K562 (cell line): ENCODE measurements at regions of chr9 and their contacts with region 1.

Region 1: GRCh38 chr9:128275996-128276573 is at the starts of genes GOLGA2 and SWI5:
- DNase-seq: peak; percentile 100
- ATAC-seq: peak; percentile 95
- H3K4me3 ChIP-seq: peak within 1 kb of the TSS; percentile 85
- H3K27ac ChIP-seq: peak within 1 kb of the TSS; percentile 90
- H3K4me1 ChIP-seq: peaks cover 40 to 53% of the 10 kb centered on the region in 2 experiments
- H3K27me3 ChIP-seq: no peaks in the 10 kb centered on the region
- CTCF ChIP-seq: no peak; a peak in 1 of 6 replicates
- EP300 ChIP-seq: 0 out of 2 replicates have a peak, but pooled peaks have one; percentile 6
- POLR2A ChIP-seq: no peak
- RAD21 ChIP-seq: no peak; a peak in 1 of 4 replicates
- polyA plus RNA-seq, gene GOLGA2: 15.7 to 21.9 TPM
- polyA plus RNA-seq, gene SWI5: 62.8 to 133 TPM

Region 2: DNA sequence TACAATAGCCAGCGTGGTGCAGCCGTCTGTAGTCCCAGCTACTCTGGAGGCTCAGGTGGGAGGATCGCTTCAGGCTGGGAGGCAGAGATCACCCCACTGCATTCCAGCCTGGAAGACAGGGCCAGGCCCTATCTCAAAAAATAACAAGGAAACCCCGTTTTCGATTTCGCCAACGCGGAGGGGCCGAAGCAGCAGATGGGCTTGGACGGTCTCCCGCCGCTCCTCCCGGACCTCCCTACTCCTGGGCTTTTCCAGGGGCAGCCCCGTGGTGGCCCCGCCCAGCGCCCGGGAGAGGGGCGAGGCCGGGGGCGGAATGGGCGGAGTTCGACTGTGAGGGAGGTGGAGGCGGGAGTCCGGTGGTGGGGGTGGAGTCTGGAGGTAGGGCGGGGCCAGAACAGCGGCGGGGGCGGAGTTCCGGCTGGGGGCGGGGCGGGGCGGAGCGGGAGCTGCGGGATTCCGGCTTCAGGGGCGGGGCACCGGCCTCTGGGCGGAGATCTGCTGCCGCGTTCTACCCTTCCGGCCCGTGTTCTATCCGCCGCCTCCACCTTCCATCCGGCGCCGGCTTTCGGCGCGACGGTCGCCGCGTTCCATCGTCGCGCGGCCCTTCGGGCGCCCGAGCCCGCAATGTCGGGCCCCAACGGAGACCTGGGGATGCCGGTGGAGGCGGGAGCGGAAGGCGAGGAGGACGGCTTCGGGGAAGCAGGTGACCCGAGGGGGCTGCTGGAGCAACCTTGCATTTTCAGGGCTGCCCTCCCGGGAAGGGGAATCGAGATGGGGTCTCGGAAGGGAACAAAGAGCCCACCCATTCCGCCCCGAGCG is 116.1 kb before region 1 on chr9 and contains the start of gene BBLN:
- CTCF ChIA-PET with region 1: no interaction called
- POLR2A ChIA-PET with region 1: interaction called, 6 read pairs
- in situ Hi-C with region 1: no loop called
- intact Hi-C with region 1: loop called (anchors 1 kb)
- DNase-seq: peak; percentile 99 to 100 (median 100)
- ATAC-seq: peak; percentile 91
- H3K4me3 ChIP-seq: peak within 1 kb of the TSS; percentile 72
- H3K27ac ChIP-seq: peak within 1 kb of the TSS; percentile 90
- H3K4me1 ChIP-seq: peaks cover 10 to 43% of the 10 kb centered on the region in 2 experiments
- H3K27me3 ChIP-seq: no peaks in the 10 kb centered on the region
- CTCF ChIP-seq: peak in 1 of 3 experiments; percentile 24; a peak in 2 of 6 replicates
- EP300 ChIP-seq: peak; percentile 16; the same call in 1 of the 2 replicates
- POLR2A ChIP-seq: peak; percentile 97
- RAD21 ChIP-seq: peak; percentile 10 to 20; a peak in 2 of 4 replicates
- polyA plus RNA-seq, gene BBLN: 4.2 to 13.7 TPM

Region 3: DNA sequence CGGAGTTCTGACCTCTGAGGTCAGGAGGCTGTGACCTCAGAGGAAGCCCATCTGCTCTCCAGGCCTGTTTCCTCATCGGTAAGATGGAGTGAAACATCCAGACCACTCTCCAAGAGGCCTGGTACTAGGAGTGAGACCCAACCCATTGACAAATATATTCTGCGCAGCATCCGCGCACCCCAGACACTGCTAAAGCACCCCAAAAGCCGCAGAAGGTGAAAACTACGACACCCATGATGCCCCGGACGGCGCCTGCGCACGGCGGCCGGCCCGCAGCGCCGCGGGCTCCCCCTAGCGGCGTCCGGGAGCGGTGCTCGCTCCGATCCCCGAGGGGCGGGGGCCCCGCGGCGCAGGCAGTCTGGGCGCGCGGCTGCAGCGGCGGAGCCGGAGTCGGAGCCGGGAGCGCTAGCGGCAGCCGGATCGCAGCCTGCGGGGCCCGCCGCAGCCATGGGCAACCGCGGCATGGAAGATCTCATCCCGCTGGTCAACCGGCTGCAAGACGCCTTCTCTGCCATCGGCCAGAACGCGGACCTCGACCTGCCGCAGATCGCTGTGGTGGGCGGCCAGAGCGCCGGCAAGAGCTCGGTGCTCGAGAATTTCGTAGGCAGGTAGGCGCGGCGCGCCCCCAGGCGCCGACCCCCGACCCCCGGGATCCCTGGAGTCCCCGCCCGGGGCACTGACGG is 72.9 kb before region 1 on chr9 and contains the start of gene DNM1:
- CTCF ChIA-PET with region 1: no interaction called
- POLR2A ChIA-PET with region 1: no interaction called
- in situ Hi-C with region 1: no loop called
- intact Hi-C with region 1: loop called (anchors 2 kb)
- DNase-seq: peak; percentile 91 to 100 (median 100)
- ATAC-seq: peak; percentile 92
- H3K4me3 ChIP-seq: peak within 1 kb of the TSS; percentile 55
- H3K27ac ChIP-seq: peak within 1 kb of the TSS; percentile 20; the same call in 2 of the 3 replicates
- H3K4me1 ChIP-seq: peaks cover 19 to 36% of the 10 kb centered on the region in 2 experiments
- H3K27me3 ChIP-seq: no peaks in the 10 kb centered on the region
- CTCF ChIP-seq: peak; percentile 96 to 99 (median 97)
- EP300 ChIP-seq: peak; percentile 45
- POLR2A ChIP-seq: no peak
- RAD21 ChIP-seq: peak; percentile 46 to 67
- polyA plus RNA-seq, gene DNM1: 0.39 to 0.58 TPM

Region 4: DNA sequence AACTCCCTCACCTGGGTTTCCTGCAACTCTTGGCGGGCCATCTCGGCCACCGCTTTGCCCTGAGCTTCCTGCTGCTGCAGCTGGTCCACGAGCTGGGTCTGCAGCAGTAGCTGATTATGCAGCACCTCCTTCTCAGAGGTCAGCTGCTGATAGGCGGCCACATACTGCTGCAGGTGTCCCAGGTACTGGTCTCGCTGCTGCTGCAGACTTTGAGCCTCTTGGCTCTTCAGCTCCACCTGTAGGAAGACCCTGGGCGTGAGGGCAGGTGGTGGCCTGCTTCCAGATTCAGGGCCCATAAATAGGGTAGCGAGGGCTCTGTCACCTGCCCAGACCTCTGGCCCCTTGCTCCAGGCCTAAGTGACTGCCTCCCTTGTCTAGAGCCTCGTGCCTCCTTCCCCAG is 16.9 kb before region 1 on chr9:
- CTCF ChIA-PET with region 1: no interaction called
- POLR2A ChIA-PET with region 1: interaction called, 37 read pairs
- in situ Hi-C with region 1: no loop called
- intact Hi-C with region 1: no loop called
- DNase-seq: peak in 1 of 4 experiments; percentile 44
- ATAC-seq: no peak
- H3K4me3 ChIP-seq: no peak overlapping the region
- H3K27ac ChIP-seq: no peak overlapping the region
- H3K4me1 ChIP-seq: peaks cover 14 to 37% of the 10 kb centered on the region in 2 experiments
- H3K27me3 ChIP-seq: no peaks in the 10 kb centered on the region
- CTCF ChIP-seq: peak; percentile 47 to 55 (median 48); a peak in 5 of 6 replicates
- EP300 ChIP-seq: no peak
- POLR2A ChIP-seq: no peak
- RAD21 ChIP-seq: peak in 1 of 2 experiments; percentile 51; a peak in 2 of 4 replicates

Region 5: DNA sequence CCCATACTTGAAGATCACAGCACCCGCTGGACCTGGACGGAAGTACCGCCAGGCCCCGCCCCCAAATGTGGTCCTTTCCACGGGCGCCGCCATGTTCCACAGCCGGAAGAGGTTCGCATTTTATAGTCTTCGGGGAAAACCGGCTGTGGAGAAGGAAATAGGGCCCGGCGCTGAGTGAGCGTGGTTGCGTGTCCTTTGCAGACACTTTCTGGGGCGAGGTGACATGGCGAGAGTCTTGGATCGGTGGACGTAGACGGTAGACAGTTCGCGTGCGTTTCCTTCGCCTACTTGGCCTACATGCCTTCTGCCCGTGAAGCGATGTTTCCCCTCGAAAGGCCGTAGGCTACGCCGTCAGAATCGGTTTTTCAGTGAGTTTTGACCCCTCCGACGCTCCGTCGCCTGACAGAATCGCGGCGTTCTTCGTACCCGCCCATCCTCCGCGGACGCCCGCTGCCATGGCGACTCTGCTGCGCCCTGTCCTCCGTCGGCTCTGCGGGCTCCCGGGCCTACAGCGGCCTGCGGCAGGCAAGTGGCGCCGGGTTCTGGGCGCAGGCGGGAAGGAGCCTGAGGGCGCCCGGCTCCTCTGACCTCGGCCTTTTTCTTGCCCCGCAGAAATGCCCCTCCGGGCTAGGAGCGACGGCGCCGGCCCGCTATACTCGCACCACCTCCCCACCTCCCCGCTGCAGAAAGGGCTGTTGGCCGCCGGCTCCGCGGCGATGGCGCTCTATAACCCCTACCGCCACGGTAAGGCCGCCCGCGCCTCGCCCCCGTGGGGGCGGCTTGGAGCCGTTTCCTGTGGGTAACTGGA is 46.5 kb after region 1 on chr9 and contains the starts of genes COQ4 and TRUB2:
- CTCF ChIA-PET with region 1: no interaction called
- POLR2A ChIA-PET with region 1: no interaction called
- in situ Hi-C with region 1: no loop called
- intact Hi-C with region 1: loop called (anchors 1 kb)
- DNase-seq: peak; percentile 98 to 100 (median 100)
- ATAC-seq: peak; percentile 95
- H3K4me3 ChIP-seq: peak within 1 kb of the TSS; percentile 67
- H3K27ac ChIP-seq: peak within 1 kb of the TSS; percentile 94
- H3K4me1 ChIP-seq: peaks cover 8 to 19% of the 10 kb centered on the region in 2 experiments
- H3K27me3 ChIP-seq: no peaks in the 10 kb centered on the region
- CTCF ChIP-seq: peak in 2 of 3 experiments; percentile 32 to 37; a peak in 4 of 6 replicates
- EP300 ChIP-seq: peak; percentile 66
- POLR2A ChIP-seq: no peak
- RAD21 ChIP-seq: peak; percentile 21 to 45
- polyA plus RNA-seq, gene COQ4: 9.1 to 11.3 TPM
- polyA plus RNA-seq, gene TRUB2: 9.3 to 24.2 TPM

Region 6: DNA sequence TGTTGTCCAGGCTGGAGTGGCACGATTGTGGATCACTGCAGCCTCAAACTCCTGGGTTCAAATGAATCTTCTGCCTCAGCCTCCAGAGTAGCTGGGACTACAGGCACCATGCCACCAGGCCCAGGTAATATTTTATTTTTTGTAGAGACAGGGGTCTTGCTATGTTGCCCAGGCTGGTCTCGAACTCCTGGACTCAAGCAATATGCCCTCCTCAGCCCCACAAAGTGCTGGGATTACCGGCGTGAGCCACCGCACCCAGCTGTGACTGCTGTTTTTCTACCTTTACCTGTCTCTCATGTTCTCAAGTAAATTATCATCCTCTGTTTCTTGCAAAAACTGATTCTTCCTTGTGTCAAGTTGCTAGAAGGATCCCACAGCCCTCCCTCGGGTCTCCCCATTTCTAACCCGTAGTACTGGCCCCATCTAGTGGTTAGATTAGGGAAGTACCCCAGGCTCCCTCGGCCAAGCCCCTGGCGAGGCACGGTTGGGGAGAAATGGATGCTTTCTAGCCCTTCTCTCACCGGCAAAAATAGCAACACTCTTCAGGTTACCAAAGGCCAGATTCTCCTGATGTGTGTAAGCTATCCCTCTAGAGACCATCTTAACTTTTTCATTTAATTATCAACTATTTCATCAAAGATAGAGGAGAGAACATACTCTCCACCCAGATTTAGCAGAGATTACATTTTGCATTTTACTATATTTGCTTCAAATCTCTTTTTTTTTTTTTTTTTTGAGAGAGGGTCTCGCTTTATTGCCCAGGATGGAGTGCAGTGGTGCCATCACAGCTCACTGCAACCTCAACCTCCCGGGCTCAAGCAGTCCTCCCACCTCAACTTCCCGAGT is 1507.7 kb after region 1 on chr9:
- CTCF ChIA-PET with region 1: no interaction called
- POLR2A ChIA-PET with region 1: no interaction called
- in situ Hi-C with region 1: loop called (anchors 25 kb)
- intact Hi-C with region 1: no loop called
- DNase-seq: peak; percentile 89 to 97 (median 96)
- ATAC-seq: peak; percentile 97
- H3K4me3 ChIP-seq: no peak overlapping the region
- H3K27ac ChIP-seq: no peak overlapping the region
- H3K4me1 ChIP-seq: peaks cover 8 to 15% of the 10 kb centered on the region in 2 experiments; a peak in 3 of 5 replicates
- H3K27me3 ChIP-seq: no peaks in the 10 kb centered on the region; a peak in 1 of 5 replicates
- CTCF ChIP-seq: peak; percentile 97 to 99 (median 99)
- EP300 ChIP-seq: no peak; the same call in 1 of the 2 replicates
- POLR2A ChIP-seq: no peak
- RAD21 ChIP-seq: peak; percentile 100